ENCODE measurements at regions of chr1 and their contacts with region 1.

Region 1: DNA sequence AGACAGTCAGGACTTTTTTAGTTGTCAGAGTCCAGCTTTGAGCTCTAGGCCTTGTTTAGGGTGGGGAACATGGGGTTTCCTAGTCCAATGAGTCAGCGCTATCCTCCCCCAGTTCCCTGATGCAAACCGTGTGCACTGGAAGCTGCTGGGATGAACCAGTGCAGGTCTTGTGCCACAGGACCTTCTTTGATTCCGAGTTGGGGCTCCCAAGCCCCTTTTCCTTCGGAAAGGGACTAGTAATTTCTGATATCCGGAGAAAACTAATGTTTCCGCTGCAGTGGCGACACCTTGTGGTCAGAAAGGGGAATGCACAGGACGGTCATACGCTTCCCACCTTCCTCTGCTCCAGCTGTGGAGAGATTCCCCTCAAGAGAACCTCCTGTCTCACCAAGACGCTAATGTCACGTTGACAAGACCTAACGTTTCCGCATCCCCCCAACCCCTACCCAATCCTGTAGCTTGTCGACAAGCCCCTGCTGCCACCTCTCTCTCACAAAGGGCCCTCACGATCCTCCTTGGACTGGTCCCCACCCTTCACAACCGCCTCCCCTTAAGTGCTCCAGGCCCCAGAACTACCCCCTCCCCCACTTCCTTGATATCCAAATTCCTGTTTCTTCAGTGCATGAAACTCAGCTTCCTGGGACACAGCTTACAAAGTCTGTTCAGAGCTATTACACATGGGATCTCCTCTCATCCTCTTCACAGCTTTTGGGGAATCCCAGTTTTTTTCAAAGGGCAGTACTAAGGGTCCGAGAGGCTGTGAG is 30.9 kb downstream of the GPA33 start:
- DNase-seq: peak; percentile 69
- H3K4me3 ChIP-seq: peak overlapping the region in 1 of 2 experiments; percentile 29; a peak in 2 of 4 replicates
- H3K27ac ChIP-seq: no peak overlapping the region
- H3K4me1 ChIP-seq: peaks cover 0 to 5% of the 10 kb centered on the region in 2 experiments; a peak in 1 of 4 replicates
- H3K27me3 ChIP-seq: no peaks in the 10 kb centered on the region
- CTCF ChIP-seq: peak; percentile 95
- EP300 ChIP-seq: no peak
- RAD21 ChIP-seq: peak; percentile 79

Region 2: GRCh38 chr1:166920561-166921475 is 138.4 kb before region 1 on chr1:
- CTCF ChIA-PET with region 1: interaction called, 769 read pairs
- POLR2A ChIA-PET with region 1: no interaction called
- DNase-seq: peak; percentile 47
- H3K4me3 ChIP-seq: no peak overlapping the region
- H3K27ac ChIP-seq: no peak overlapping the region
- H3K4me1 ChIP-seq: no peaks in the 10 kb centered on the region; a peak in 1 of 4 replicates
- H3K27me3 ChIP-seq: peaks cover 44% of the 10 kb centered on the region
- CTCF ChIP-seq: no peak
- EP300 ChIP-seq: no peak
- RAD21 ChIP-seq: no peak

Region 3: DNA sequence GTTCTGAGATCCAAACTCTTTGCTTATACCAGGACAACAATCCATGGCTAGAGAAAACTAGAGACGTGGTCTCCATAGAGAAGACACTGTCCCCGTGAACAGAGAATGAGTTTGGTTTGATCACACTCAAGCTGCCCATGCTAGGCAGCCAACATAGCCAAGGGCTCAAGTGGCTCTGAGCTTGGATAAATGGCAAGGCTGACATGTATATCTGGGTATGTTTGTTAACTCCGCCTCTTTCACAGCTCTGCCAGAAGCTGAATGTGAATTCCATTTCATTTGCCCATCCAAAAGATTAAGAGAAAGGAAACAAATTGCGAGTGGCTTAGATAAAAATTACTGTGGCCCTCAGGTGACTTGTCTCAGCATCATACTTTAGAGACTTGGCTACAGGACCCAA is 121.9 kb before region 1 on chr1:
- CTCF ChIA-PET with region 1: interaction called, 10 read pairs
- POLR2A ChIA-PET with region 1: no interaction called
- DNase-seq: no peak
- H3K4me3 ChIP-seq: no peak overlapping the region
- H3K27ac ChIP-seq: no peak overlapping the region
- H3K4me1 ChIP-seq: no peaks in the 10 kb centered on the region
- H3K27me3 ChIP-seq: peaks cover 11% of the 10 kb centered on the region; the same call in 1 of the 2 replicates
- CTCF ChIP-seq: no peak
- EP300 ChIP-seq: no peak
- RAD21 ChIP-seq: no peak

Region 4: GRCh38 chr1:166975361-166976129 is 83.7 kb before region 1 on chr1 and contains the start of gene ILDR2:
- CTCF ChIA-PET with region 1: interaction called, 12 read pairs
- POLR2A ChIA-PET with region 1: no interaction called
- DNase-seq: peak; percentile 78
- H3K4me3 ChIP-seq: peak within 1 kb of the TSS; percentile 55 to 74
- H3K27ac ChIP-seq: no peak within 1 kb of the TSS
- H3K4me1 ChIP-seq: peaks cover 0 to 7% of the 10 kb centered on the region in 2 experiments; a peak in 1 of 4 replicates
- H3K27me3 ChIP-seq: peaks cover 51% of the 10 kb centered on the region
- CTCF ChIP-seq: no peak
- EP300 ChIP-seq: no peak
- RAD21 ChIP-seq: no peak
- polyA plus RNA-seq, gene ILDR2: 0.05 and 0.24 TPM in 2 replicates

Region 5: DNA sequence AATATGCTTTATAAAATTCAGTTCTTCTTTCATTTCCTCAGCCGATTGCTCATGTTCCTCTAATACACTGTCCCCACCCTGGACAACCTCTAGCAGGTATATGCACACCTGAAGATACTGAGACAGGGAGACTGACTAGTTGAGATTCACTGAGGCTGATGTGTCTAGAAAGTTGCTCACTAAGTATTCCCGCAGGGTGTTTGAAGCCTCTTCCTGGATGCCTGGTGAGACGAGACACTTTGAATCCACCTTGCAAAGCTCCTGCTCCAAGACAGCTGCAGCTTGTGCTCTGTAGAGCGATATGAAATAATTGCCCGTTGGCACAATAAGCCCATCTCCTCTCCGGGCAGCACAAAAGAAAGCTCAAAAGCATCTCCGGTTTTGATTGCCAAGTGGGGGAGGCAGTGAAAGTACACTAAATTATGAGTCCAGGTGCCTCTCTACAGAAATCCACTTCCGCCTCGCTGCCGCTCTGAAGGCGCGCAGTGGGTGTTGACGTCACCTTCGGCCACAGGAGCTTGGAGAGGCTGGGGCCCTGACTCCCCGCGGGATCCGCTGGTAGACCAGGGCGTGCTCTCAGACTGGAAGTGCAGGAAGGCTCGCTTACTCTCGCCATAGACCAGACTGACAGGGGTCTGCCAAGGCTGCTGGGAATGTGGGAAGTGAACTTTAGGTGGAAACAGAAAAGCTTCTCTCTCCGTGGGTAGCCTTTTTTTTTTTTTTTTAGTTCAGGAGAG is 15.3 kb before region 1 on chr1:
- CTCF ChIA-PET with region 1: interaction called, 37 read pairs
- POLR2A ChIA-PET with region 1: no interaction called
- DNase-seq: peak; percentile 67
- H3K4me3 ChIP-seq: peak overlapping the region; percentile 42 to 45; a peak in 3 of 4 replicates
- H3K27ac ChIP-seq: no peak overlapping the region
- H3K4me1 ChIP-seq: peaks cover 0 to 5% of the 10 kb centered on the region in 2 experiments; a peak in 1 of 4 replicates
- H3K27me3 ChIP-seq: no peaks in the 10 kb centered on the region; the same call in 1 of the 2 replicates
- CTCF ChIP-seq: no peak
- EP300 ChIP-seq: no peak
- RAD21 ChIP-seq: no peak

Region 6: GRCh38 chr1:167220537-167221125 is 161.4 kb after region 1 on chr1 and contains the start of gene POU2F1:
- CTCF ChIA-PET with region 1: interaction called, 15 read pairs
- POLR2A ChIA-PET with region 1: no interaction called
- DNase-seq: peak; percentile 96
- H3K4me3 ChIP-seq: peak within 1 kb of the TSS; percentile 85 to 100
- H3K27ac ChIP-seq: peak within 1 kb of the TSS; percentile 74 to 92
- H3K4me1 ChIP-seq: peaks cover 4 to 19% of the 10 kb centered on the region in 2 experiments; a peak in 3 of 4 replicates
- H3K27me3 ChIP-seq: no peaks in the 10 kb centered on the region
- CTCF ChIP-seq: peak; percentile 68
- EP300 ChIP-seq: no peak
- RAD21 ChIP-seq: peak; percentile 60
- polyA plus RNA-seq, gene POU2F1: 1.2 and 1.5 TPM in 2 replicates

Region 7: GRCh38 chr1:167442124-167442848 is 383.1 kb after region 1 on chr1:
- CTCF ChIA-PET with region 1: interaction called, 32 read pairs
- POLR2A ChIA-PET with region 1: no interaction called
- DNase-seq: peak; percentile 91
- H3K4me3 ChIP-seq: peak overlapping the region in 1 of 2 experiments; percentile 42; a peak in 1 of 4 replicates
- H3K27ac ChIP-seq: no peak overlapping the region
- H3K4me1 ChIP-seq: peaks cover 0 to 7% of the 10 kb centered on the region in 2 experiments; a peak in 1 of 4 replicates
- H3K27me3 ChIP-seq: no peaks in the 10 kb centered on the region; the same call in 1 of the 2 replicates
- CTCF ChIP-seq: peak; percentile 89
- EP300 ChIP-seq: no peak
- RAD21 ChIP-seq: peak; percentile 94

Measured in SK-N-SH (cell line).